Stomach (tissue), 19 donors: ENCODE measurements at regions of chr2 and their contacts with region 1.

Region 1: GRCh38 chr2:120675460-120676130 is 60.1 kb upstream of the GLI2 start:
- DNase-seq: peak; percentile 68 to 79
- H3K4me3 ChIP-seq: no peak overlapping the region
- H3K27ac ChIP-seq: no peak overlapping the region
- H3K4me1 ChIP-seq: peaks cover 0 to 6% (median 2%) of the 10 kb centered on the region in 4 donors
- H3K27me3 ChIP-seq: peaks cover 0 to 81% (median 14%) of the 10 kb centered on the region in 3 donors
- CTCF ChIP-seq: peak in 5 of 7 experiments; percentile 36 to 67 (median 59)
- EP300 ChIP-seq: no peak
- POLR2A ChIP-seq: no peak

Region 2: GRCh38 chr2:120343433-120344105 is 332.0 kb before region 1 on chr2:
- intact Hi-C with region 1: loop called (anchors 5 kb)
- DNase-seq: peak; percentile 86 to 94
- H3K4me3 ChIP-seq: peak overlapping the region; percentile 54 to 74 (median 57)
- H3K27ac ChIP-seq: peak overlapping the region in 1 of 5 donors; percentile 29
- H3K4me1 ChIP-seq: peaks cover 35 to 55% (median 46%) of the 10 kb centered on the region in 4 donors
- H3K27me3 ChIP-seq: peaks cover 12 to 95% (median 63%) of the 10 kb centered on the region in 3 donors
- CTCF ChIP-seq: peak in 5 of 7 experiments; percentile 64 to 82 (median 79)
- EP300 ChIP-seq: no peak
- POLR2A ChIP-seq: no peak